A673 (cell line): ENCODE measurements at regions of chr10 and their contacts with region 1.

Region 1: DNA sequence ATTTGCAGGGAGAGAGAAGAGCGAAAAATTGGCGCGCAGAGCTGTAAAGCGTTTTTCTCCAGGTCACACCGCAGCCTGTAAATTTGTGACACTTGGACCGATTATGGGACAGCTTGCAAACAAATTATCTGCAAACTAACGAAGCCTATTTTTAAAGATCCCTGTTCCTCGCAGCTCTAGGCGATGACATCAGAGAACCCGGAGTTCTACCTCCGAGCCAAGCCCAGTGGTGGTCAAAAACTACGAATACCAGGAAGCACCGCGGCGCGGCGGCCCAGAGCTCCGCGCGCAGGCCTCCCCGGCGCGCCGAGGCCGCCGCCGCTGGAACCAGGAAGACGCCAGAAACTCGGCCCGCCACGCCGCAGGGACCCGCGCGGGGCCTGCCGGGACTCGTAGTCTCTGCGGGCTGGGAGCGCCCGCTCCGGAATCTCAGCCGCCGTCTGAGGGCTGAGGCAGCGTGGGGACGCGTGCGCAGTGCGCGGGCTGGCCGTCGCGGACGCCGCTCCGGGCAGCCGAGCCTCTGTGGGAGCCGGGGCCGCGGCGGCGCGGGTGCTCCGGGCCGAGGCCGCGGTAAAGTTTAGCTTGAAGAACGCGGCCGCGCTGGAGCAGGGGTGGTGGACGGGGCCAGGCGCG is at the start of gene PLEKHA1:
- DNase-seq: peak; percentile 98
- H3K4me3 ChIP-seq: peak within 1 kb of the TSS; percentile 67
- H3K27ac ChIP-seq: peak within 1 kb of the TSS; percentile 79
- H3K4me1 ChIP-seq: peaks cover 9% of the 10 kb centered on the region
- H3K27me3 ChIP-seq: peaks cover 19% of the 10 kb centered on the region
- CTCF ChIP-seq: no peak
- total RNA-seq, gene PLEKHA1: 18.9 and 20.5 TPM in 2 replicates

Region 2: DNA sequence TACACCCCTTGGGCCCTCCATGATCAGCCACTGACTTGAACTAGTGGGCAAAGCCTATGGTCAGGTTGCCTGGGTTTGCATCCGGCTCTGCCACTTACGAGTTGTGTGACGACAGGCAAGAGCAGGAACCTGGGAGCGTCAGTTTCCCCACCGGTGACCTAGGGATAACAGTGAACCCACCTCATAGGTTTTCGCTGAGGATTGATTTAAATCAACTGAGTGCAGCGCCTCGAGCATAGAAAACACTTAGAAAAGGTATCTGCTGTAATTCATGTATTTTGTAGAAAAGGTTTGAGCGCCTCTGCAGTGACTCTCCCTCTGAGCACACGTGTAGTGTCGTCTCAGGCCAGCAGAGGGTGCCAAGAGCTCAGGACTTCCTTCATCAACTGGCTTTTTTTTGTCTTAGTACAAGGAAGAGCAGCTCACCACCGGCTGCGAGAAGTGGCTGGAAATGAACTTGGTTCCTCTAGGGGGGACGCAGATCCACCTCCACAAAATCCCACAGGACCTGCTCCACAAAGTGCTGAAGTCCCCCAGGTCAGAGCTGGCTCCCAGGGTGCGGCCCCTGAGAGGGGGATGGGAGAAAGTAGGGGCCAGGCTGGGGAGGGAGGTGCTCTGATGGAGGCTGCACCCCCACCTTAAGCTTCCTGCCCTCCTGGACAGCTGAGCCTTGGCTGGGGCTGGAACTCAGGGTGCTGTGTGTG is 75.6 kb before region 1 on chr10:
- CTCF ChIA-PET with region 1: interaction called, 10 read pairs
- POLR2A ChIA-PET with region 1: no interaction called
- intact Hi-C with region 1: no loop called
- DNase-seq: peak; percentile 79
- H3K4me3 ChIP-seq: no peak overlapping the region
- H3K27ac ChIP-seq: no peak overlapping the region
- H3K4me1 ChIP-seq: no peaks in the 10 kb centered on the region
- H3K27me3 ChIP-seq: no peaks in the 10 kb centered on the region
- CTCF ChIP-seq: peak; percentile 86